ENCODE measurements at regions of chr6 and their contacts with region 1.

Region 1: GRCh38 chr6:125956506-125957390 is at the start of gene HINT3:
- DNase-seq: peak; percentile 99
- H3K4me3 Mint-ChIP-seq: peak within 1 kb of the TSS; percentile 58
- H3K27ac Mint-ChIP-seq: peak within 1 kb of the TSS; percentile 43
- H3K4me1 Mint-ChIP-seq: peaks cover 6% of the 10 kb centered on the region
- H3K27me3 Mint-ChIP-seq: peaks cover 4% of the 10 kb centered on the region
- total RNA-seq, gene HINT3: 9.6 to 9.8 TPM

Region 2: DNA sequence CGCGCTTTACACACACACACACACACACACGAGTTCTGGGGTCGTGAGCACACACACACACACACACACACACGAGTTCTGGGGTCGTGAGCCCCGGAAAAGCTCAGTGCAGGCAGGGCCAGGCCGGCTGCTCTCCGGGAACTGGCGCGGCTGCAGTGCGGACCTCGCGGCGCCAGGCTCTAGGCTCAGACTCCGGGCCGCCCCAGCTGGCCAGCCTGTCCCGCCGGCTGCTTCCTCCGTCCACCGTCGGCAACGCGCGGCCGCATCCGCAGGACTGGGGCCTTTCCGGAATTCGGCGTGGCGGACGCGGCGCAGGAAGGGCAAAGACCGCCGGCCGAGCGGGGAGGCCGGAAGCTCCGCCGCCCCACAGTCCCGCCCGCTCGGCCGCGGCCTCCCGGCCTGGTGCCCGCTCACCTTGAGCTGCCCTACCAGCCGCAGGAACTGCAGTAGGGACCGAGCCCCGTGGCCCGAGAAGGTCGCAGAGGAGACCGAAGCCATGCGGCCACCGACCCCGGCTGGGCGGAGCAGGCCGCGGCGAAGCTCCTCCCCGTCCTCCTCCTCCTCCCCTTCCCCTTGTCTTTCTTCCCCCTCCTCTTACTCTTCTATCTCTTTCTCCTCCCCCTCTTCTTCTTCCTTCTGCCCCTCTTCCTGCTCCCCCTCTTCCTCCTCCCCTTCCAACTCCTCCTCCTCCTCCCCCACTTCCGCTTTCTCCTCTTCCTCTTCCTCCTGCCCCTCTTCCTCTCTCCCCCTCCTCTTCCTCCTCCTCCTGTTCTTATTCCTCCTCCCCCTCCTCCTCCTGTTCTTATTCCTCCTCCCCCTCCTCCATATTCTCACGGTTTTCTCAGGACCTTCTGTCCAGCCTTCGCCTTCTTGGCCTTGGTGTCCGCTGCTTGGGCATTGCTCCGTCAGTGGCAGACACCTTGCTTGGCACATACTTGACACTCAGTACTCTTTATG is 655.0 kb before region 1 on chr6 and contains the start of gene HDDC2:
- CTCF ChIA-PET with region 1: interaction called, 8 read pairs
- POLR2A ChIA-PET with region 1: no interaction called
- intact Hi-C with region 1: loop called (anchors 5 kb)
- DNase-seq: peak; percentile 57
- H3K4me3 Mint-ChIP-seq: peak within 1 kb of the TSS; percentile 91
- H3K27ac Mint-ChIP-seq: peak within 1 kb of the TSS; percentile 95
- H3K4me1 Mint-ChIP-seq: peaks cover 54% of the 10 kb centered on the region
- H3K27me3 Mint-ChIP-seq: no peaks in the 10 kb centered on the region
- total RNA-seq, gene HDDC2: 88.9 to 92.3 TPM

Region 3: GRCh38 chr6:125790358-125791150 is 166.2 kb before region 1 on chr6 and contains the start of gene NCOA7:
- CTCF ChIA-PET with region 1: interaction called, 106 read pairs
- POLR2A ChIA-PET with region 1: interaction called, 32 read pairs
- intact Hi-C with region 1: loop called (anchors 1 kb)
- DNase-seq: peak; percentile 86
- H3K4me3 Mint-ChIP-seq: peak within 1 kb of the TSS; percentile 86
- H3K27ac Mint-ChIP-seq: peak within 1 kb of the TSS; percentile 96
- H3K4me1 Mint-ChIP-seq: peaks cover 54% of the 10 kb centered on the region
- H3K27me3 Mint-ChIP-seq: no peaks in the 10 kb centered on the region
- total RNA-seq, gene NCOA7: 42.3 to 43.4 TPM

Region 4: DNA sequence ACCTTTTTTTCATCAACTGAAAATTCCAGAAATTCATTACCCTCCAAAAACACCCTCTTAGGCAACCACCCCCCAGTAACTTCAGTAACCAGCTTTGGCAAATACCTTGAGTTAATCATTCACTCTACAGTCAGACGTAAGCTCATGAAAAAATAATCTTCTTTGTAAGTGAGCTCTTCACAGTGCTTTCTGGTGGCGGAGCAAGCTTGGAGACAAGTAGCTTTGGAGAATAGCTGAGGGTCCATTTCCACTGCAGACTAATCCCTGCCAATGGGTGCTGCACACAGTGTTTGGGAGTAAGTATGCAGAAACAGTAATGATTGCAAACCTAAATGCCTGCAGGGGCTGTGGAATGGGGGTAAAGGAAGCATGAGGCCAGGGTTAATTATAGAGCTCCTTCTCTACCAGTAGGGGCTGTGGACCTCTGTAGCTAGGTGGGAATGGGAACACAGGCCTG is 57.0 kb before region 1 on chr6:
- CTCF ChIA-PET with region 1: interaction called, 66 read pairs
- POLR2A ChIA-PET with region 1: interaction called, 6 read pairs
- intact Hi-C with region 1: loop called (anchors 1 kb)
- DNase-seq: no peak
- H3K4me3 Mint-ChIP-seq: no peak overlapping the region
- H3K27ac Mint-ChIP-seq: no peak overlapping the region
- H3K4me1 Mint-ChIP-seq: peaks cover 11% of the 10 kb centered on the region
- H3K27me3 Mint-ChIP-seq: no peaks in the 10 kb centered on the region

Region 5: GRCh38 chr6:125918681-125919566 is 37.8 kb before region 1 on chr6:
- CTCF ChIA-PET with region 1: interaction called, 41 read pairs
- POLR2A ChIA-PET with region 1: no interaction called
- intact Hi-C with region 1: loop called (anchors 1 kb)
- DNase-seq: peak; percentile 65
- H3K4me3 Mint-ChIP-seq: peak overlapping the region; percentile 87
- H3K27ac Mint-ChIP-seq: peak overlapping the region; percentile 96
- H3K4me1 Mint-ChIP-seq: peaks cover 47% of the 10 kb centered on the region
- H3K27me3 Mint-ChIP-seq: no peaks in the 10 kb centered on the region

Region 6: DNA sequence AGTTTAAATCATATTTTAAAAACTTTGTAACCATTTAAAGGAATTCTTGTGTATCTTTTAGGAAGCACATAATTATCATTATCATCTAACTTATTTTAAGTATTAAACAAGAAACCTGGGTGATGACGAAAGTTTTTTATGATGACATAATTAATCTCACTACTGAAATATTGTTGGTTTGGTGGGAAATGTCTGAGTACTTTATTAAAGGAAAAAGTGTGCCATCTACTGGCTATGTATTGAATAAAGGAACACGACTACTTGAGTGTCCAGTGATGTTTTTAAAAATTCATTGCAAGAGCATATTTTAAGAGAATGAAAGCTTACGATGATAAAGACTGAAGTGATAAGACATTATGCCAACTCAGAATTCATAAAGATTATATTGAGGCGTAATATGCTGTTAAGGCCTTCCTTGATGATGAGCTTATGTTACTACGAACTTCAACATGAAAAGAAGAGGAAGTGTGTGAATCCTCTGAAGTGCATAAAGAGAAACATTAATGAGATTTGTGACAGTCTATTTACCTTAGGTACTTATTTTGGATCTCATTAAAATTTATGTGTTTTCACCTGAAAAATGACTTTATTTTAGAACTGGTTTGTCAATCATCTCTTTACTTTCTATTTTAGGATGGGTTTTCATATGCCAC is 17.6 kb after region 1 on chr6:
- CTCF ChIA-PET with region 1: interaction called, 31 read pairs
- POLR2A ChIA-PET with region 1: interaction called, 4 read pairs
- intact Hi-C with region 1: no loop called
- DNase-seq: no peak
- H3K4me3 Mint-ChIP-seq: no peak overlapping the region
- H3K27ac Mint-ChIP-seq: no peak overlapping the region
- H3K4me1 Mint-ChIP-seq: peaks cover 4% of the 10 kb centered on the region
- H3K27me3 Mint-ChIP-seq: no peaks in the 10 kb centered on the region

Region 7: GRCh38 chr6:126007800-126008199 is 51.1 kb after region 1 on chr6:
- CTCF ChIA-PET with region 1: no interaction called
- POLR2A ChIA-PET with region 1: no interaction called
- intact Hi-C with region 1: no loop called
- DNase-seq: no peak
- H3K4me3 Mint-ChIP-seq: no peak overlapping the region
- H3K27ac Mint-ChIP-seq: no peak overlapping the region
- H3K4me1 Mint-ChIP-seq: peaks cover 3% of the 10 kb centered on the region
- H3K27me3 Mint-ChIP-seq: no peaks in the 10 kb centered on the region

Measured in activated CD4-positive, alpha-beta memory T cell treated with anti-CD3 and anti-CD28 coated beads for 36 hours (primary cell).